H1 (cell line): ENCODE measurements at regions of chr9 and their contacts with region 1.

Region 1: GRCh38 chr9:7055201-7055903 is 297.6 kb downstream of the KDM4C start:
- DNase-seq: no peak
- H3K4me3 ChIP-seq: no peak overlapping the region
- H3K27ac ChIP-seq: no peak overlapping the region
- H3K4me1 ChIP-seq: peaks cover 0 to 4% (median 1%) of the 10 kb centered on the region in 4 experiments; a peak in 3 of 7 replicates
- H3K27me3 ChIP-seq: no peaks in the 10 kb centered on the region
- CTCF ChIP-seq: no peak
- EP300 ChIP-seq: no peak
- POLR2A ChIP-seq: no peak
- RAD21 ChIP-seq: no peak

Region 2: GRCh38 chr9:6827439-6827838 is 227.9 kb before region 1 on chr9:
- CTCF ChIA-PET with region 1: interaction called, 17 read pairs
- POLR2A ChIA-PET with region 1: no interaction called
- DNase-seq: peak in 1 of 2 experiments; percentile 63
- H3K4me3 ChIP-seq: no peak overlapping the region
- H3K27ac ChIP-seq: no peak overlapping the region
- H3K4me1 ChIP-seq: no peaks in the 10 kb centered on the region
- H3K27me3 ChIP-seq: no peaks in the 10 kb centered on the region
- CTCF ChIP-seq: peak in 2 of 3 experiments; percentile 62 to 65; a peak in 2 of 4 replicates
- EP300 ChIP-seq: no peak
- POLR2A ChIP-seq: no peak
- RAD21 ChIP-seq: peak; percentile 91

Region 3: GRCh38 chr9:7067169-7067568 is 11.8 kb after region 1 on chr9:
- CTCF ChIA-PET with region 1: interaction called, 14 read pairs
- POLR2A ChIA-PET with region 1: interaction called, 3 read pairs
- DNase-seq: no peak
- H3K4me3 ChIP-seq: no peak overlapping the region
- H3K27ac ChIP-seq: no peak overlapping the region
- H3K4me1 ChIP-seq: no peaks in the 10 kb centered on the region
- H3K27me3 ChIP-seq: no peaks in the 10 kb centered on the region
- CTCF ChIP-seq: no peak
- EP300 ChIP-seq: no peak
- POLR2A ChIP-seq: no peak
- RAD21 ChIP-seq: no peak

Region 4: DNA sequence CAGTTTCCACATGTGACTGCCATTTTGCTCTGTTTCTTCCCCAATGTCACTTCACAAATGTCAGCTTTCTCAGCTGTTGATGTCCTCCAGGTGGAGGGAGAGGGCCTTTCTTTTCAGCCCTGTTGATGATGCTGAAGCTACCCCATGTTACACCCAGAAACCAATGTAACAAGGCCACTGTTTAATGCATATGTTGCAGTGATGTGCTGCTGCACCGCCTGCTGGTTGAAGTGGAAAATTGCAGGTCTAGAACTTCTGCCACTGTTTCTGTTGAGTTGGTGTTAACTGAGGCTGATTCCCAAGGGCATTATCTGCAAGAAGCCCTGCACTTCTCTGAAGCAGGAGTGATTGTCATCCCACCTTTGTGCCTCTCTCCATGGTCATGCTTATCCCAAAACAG is 130.8 kb after region 1 on chr9:
- CTCF ChIA-PET with region 1: interaction called, 12 read pairs
- POLR2A ChIA-PET with region 1: no interaction called
- DNase-seq: peak in 1 of 2 experiments; percentile 15
- H3K4me3 ChIP-seq: no peak overlapping the region
- H3K27ac ChIP-seq: no peak overlapping the region
- H3K4me1 ChIP-seq: no peaks in the 10 kb centered on the region
- H3K27me3 ChIP-seq: no peaks in the 10 kb centered on the region
- CTCF ChIP-seq: peak; percentile 50 to 89 (median 81)
- EP300 ChIP-seq: no peak
- POLR2A ChIP-seq: no peak
- RAD21 ChIP-seq: peak; percentile 77 to 81

Region 5: GRCh38 chr9:7259544-7260241 is 204.3 kb after region 1 on chr9:
- CTCF ChIA-PET with region 1: interaction called, 12 read pairs
- POLR2A ChIA-PET with region 1: no interaction called
- DNase-seq: no peak
- H3K4me3 ChIP-seq: no peak overlapping the region
- H3K27ac ChIP-seq: no peak overlapping the region
- H3K4me1 ChIP-seq: no peaks in the 10 kb centered on the region; a peak in 3 of 7 replicates
- H3K27me3 ChIP-seq: no peaks in the 10 kb centered on the region; a peak in 1 of 7 replicates
- CTCF ChIP-seq: peak in 1 of 3 experiments; percentile 33; a peak in 1 of 4 replicates
- EP300 ChIP-seq: no peak
- POLR2A ChIP-seq: no peak
- RAD21 ChIP-seq: peak; percentile 31 to 50; a peak in 3 of 4 replicates

Region 6: GRCh38 chr9:7481570-7481969 is 426.2 kb after region 1 on chr9:
- CTCF ChIA-PET with region 1: interaction called, 11 read pairs
- POLR2A ChIA-PET with region 1: no interaction called
- DNase-seq: no peak
- H3K4me3 ChIP-seq: no peak overlapping the region
- H3K27ac ChIP-seq: no peak overlapping the region
- H3K4me1 ChIP-seq: no peaks in the 10 kb centered on the region
- H3K27me3 ChIP-seq: no peaks in the 10 kb centered on the region
- CTCF ChIP-seq: no peak
- EP300 ChIP-seq: no peak
- POLR2A ChIP-seq: no peak
- RAD21 ChIP-seq: no peak